IMR-90 (cell line): ENCODE measurements at regions of chr19 and their contacts with region 1.

Region 1: DNA sequence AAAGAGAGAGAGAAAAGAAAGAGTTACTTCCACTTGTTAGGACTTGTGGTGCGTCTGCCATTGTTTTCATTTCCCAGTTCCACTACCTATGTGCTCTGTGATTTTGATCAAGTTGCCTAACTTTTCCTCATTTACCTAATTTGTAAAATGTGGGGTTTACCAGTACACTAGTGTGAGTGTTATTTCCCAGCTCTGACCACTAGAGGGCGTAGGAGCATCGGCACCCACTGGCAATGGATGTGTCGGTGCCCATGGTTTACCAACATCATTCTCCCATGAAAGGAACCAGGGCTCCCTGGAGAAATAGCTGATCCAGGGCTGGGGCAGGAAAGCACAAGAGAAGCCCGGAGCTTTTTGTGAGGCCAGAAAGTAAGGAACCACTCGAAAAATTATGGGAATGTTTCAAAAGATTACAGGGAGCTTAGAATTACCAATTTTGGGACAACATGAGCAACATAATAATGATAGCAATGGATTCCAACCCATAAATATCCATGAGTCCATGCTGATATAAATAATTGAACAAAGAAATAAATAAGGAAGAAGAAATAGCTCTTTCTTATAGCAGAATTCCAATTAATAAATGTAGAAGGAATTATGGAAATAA is 15.1 kb upstream of the CEACAM4 start:
- DNase-seq: peak; percentile 37
- ATAC-seq: peak; percentile 95
- H3K4me3 ChIP-seq: no peak overlapping the region
- H3K27ac ChIP-seq: no peak overlapping the region
- H3K4me1 ChIP-seq: no peaks in the 10 kb centered on the region
- H3K27me3 ChIP-seq: no peaks in the 10 kb centered on the region
- CTCF ChIP-seq: peak; percentile 77
- POLR2A ChIP-seq: no peak
- RAD21 ChIP-seq: peak; percentile 63

Region 2: GRCh38 chr19:41668315-41668714 is 26.3 kb after region 1 on chr19:
- CTCF ChIA-PET with region 1: no interaction called
- POLR2A ChIA-PET with region 1: no interaction called
- dilution Hi-C with region 1: no loop called
- in situ Hi-C with region 1: no loop called
- intact Hi-C with region 1: no loop called
- DNase-seq: no peak
- ATAC-seq: no peak
- H3K4me3 ChIP-seq: no peak overlapping the region
- H3K27ac ChIP-seq: no peak overlapping the region
- H3K4me1 ChIP-seq: no peaks in the 10 kb centered on the region
- H3K27me3 ChIP-seq: no peaks in the 10 kb centered on the region
- CTCF ChIP-seq: no peak
- POLR2A ChIP-seq: no peak
- RAD21 ChIP-seq: no peak

Region 3: GRCh38 chr19:41691268-41691970 is 49.4 kb after region 1 on chr19:
- CTCF ChIA-PET with region 1: no interaction called
- POLR2A ChIA-PET with region 1: no interaction called
- dilution Hi-C with region 1: no loop called
- in situ Hi-C with region 1: no loop called
- intact Hi-C with region 1: loop called (anchors 2 kb)
- DNase-seq: no peak
- ATAC-seq: peak; percentile 53; the same call in 1 of the 2 replicates
- H3K4me3 ChIP-seq: no peak overlapping the region
- H3K27ac ChIP-seq: no peak overlapping the region
- H3K4me1 ChIP-seq: no peaks in the 10 kb centered on the region
- H3K27me3 ChIP-seq: no peaks in the 10 kb centered on the region
- CTCF ChIP-seq: peak; percentile 48
- POLR2A ChIP-seq: no peak
- RAD21 ChIP-seq: peak; percentile 4; the same call in 1 of the 2 replicates

Region 4: DNA sequence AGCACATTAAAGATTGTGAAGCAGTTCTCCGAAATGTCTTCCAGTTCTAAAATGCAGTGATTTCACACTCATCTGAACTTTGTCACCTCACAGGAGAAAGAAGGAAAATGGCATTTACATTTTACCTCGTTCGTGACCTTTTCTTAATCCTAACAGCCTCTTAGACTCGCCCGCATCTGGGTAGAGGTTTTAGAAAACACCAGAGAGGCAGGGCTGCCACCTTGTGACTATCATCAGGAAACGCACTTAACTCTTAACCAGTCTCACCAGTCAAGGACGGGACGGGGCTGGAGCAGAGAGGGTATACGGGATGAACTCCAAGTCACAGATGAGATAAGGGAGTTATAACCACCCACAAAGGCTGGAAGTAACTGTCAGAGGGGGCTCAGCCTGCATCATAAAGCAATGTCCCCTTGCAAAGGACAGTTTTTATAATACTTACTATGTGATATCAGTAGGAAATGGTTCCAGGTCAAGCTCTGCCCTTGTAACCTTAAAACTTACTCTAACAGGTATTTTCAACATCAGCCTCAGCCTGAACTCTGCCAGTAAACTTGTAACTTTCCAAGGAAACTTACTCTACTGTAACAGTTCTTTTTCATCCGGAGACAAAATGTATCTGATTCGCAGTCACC is 104.7 kb after region 1 on chr19:
- CTCF ChIA-PET with region 1: no interaction called
- POLR2A ChIA-PET with region 1: no interaction called
- dilution Hi-C with region 1: no loop called
- in situ Hi-C with region 1: no loop called
- intact Hi-C with region 1: loop called (anchors 2 kb)
- DNase-seq: peak; percentile 39
- ATAC-seq: peak; percentile 97
- H3K4me3 ChIP-seq: no peak overlapping the region
- H3K27ac ChIP-seq: no peak overlapping the region
- H3K4me1 ChIP-seq: no peaks in the 10 kb centered on the region
- H3K27me3 ChIP-seq: peaks cover 9% of the 10 kb centered on the region
- CTCF ChIP-seq: peak; percentile 48
- POLR2A ChIP-seq: no peak
- RAD21 ChIP-seq: peak; percentile 48

Region 5: DNA sequence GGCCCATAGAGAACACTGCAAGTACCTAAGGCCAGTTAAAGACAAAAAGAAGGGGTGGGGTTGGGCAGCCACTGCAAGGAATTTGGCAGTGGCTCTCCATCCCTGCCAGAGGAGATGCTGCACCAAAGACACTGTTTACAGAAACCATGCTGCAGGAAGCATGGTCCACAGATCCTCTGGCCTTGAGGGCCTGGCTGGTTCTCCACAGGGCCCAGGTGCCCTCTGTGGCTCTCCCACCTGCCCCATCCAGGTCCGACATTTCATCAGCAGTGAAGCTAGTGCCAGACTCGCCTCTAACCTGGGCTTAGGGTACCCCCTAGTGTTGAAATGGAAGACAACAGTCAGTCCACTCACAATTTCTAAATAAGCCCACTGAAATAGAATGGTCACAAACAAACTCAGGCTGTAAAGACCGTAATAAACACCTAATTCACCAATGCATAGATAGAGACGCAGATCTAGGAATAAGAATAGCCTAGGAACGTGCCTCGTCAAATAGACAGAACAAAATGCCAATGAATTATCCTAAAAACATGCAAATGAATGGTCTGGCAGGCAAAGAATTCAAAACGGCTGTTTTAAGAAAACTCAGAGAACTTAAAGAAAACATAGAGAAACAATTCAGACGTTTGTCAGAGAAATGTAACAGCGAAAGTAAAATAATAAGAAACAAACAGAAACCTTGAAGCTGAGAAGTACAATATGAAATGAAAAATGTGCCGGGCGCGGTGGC is 179.2 kb after region 1 on chr19:
- CTCF ChIA-PET with region 1: no interaction called
- POLR2A ChIA-PET with region 1: no interaction called
- dilution Hi-C with region 1: no loop called
- in situ Hi-C with region 1: no loop called
- intact Hi-C with region 1: loop called (anchors 2 kb)
- DNase-seq: peak; percentile 15
- ATAC-seq: peak; percentile 51; the same call in 1 of the 2 replicates
- H3K4me3 ChIP-seq: no peak overlapping the region
- H3K27ac ChIP-seq: no peak overlapping the region
- H3K4me1 ChIP-seq: no peaks in the 10 kb centered on the region
- H3K27me3 ChIP-seq: no peaks in the 10 kb centered on the region; the same call in 1 of the 2 replicates
- CTCF ChIP-seq: peak; percentile 48
- POLR2A ChIP-seq: no peak
- RAD21 ChIP-seq: peak; percentile 48